IMR-90 (cell line): ENCODE measurements at regions of chr4 and their contacts with region 1.

Region 1: GRCh38 chr4:55931833-55932232 is 16.9 kb upstream of the CEP135 start:
- DNase-seq: peak; percentile 80
- ATAC-seq: peak; percentile 86
- H3K4me3 ChIP-seq: no peak overlapping the region
- H3K27ac ChIP-seq: peak overlapping the region; percentile 78
- H3K4me1 ChIP-seq: peaks cover 8% of the 10 kb centered on the region
- H3K27me3 ChIP-seq: no peaks in the 10 kb centered on the region
- CTCF ChIP-seq: no peak
- POLR2A ChIP-seq: no peak
- RAD21 ChIP-seq: no peak

Region 2: GRCh38 chr4:55491486-55491885 is 440.3 kb before region 1 on chr4:
- CTCF ChIA-PET with region 1: no interaction called
- POLR2A ChIA-PET with region 1: interaction called, 10 read pairs
- dilution Hi-C with region 1: no loop called
- in situ Hi-C with region 1: no loop called
- intact Hi-C with region 1: no loop called
- DNase-seq: peak; percentile 76
- ATAC-seq: peak; percentile 85
- H3K4me3 ChIP-seq: no peak overlapping the region
- H3K27ac ChIP-seq: no peak overlapping the region
- H3K4me1 ChIP-seq: peaks cover 7% of the 10 kb centered on the region
- H3K27me3 ChIP-seq: no peaks in the 10 kb centered on the region
- CTCF ChIP-seq: no peak
- POLR2A ChIP-seq: no peak
- RAD21 ChIP-seq: no peak

Region 3: GRCh38 chr4:56158483-56158882 is 226.7 kb after region 1 on chr4:
- CTCF ChIA-PET with region 1: no interaction called
- POLR2A ChIA-PET with region 1: no interaction called
- dilution Hi-C with region 1: no loop called
- in situ Hi-C with region 1: no loop called
- intact Hi-C with region 1: no loop called
- DNase-seq: no peak
- ATAC-seq: no peak
- H3K4me3 ChIP-seq: no peak overlapping the region
- H3K27ac ChIP-seq: no peak overlapping the region
- H3K4me1 ChIP-seq: no peaks in the 10 kb centered on the region
- H3K27me3 ChIP-seq: no peaks in the 10 kb centered on the region
- CTCF ChIP-seq: no peak
- POLR2A ChIP-seq: no peak
- RAD21 ChIP-seq: no peak

Region 4: DNA sequence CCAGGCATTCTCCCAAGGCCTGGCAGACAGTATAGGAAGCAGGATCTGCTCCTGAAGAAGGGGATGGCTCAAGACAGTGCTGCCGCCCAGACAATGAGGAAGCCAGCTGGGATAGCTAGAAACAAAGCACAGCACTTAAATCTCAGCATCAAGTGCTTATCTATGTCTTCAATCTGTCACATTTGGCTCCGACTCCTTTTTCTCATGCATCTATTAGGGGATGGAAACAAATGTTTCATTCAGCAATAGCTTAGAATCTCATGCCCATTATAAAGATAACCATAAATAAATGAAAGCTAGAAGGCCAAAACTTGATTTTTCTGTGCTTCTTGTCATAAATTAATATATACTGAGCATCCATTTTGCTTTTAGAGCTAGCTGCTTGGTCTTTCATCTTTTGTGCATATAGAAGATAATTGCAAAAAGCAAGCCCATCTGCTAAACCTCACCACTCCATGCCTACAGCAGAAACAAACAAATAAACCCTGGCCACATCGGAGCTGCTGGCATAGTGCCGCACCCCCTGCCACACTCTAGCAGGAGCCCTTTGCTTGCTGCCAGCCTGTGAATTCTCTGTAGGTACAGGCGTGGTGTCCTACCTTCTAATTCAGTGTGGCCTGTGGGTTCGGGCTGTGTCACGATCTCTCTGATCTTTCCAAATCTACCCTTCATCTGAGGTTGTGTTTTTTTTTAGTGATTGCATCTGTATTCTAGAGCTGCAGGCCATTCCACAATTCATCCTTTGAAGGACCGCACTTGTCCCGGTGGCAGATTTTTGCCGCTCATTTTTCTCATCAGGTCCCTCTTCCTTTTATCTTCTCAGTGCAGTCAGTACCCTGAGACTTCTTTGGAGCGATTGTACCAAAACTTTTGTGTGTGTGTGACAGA is 379.7 kb after region 1 on chr4:
- CTCF ChIA-PET with region 1: no interaction called
- POLR2A ChIA-PET with region 1: no interaction called
- dilution Hi-C with region 1: no loop called
- in situ Hi-C with region 1: no loop called
- intact Hi-C with region 1: no loop called
- DNase-seq: no peak
- ATAC-seq: no peak
- H3K4me3 ChIP-seq: no peak overlapping the region
- H3K27ac ChIP-seq: no peak overlapping the region
- H3K4me1 ChIP-seq: no peaks in the 10 kb centered on the region
- H3K27me3 ChIP-seq: 0 out of 2 replicates have a peak, but pooled peaks cover 2% of the 10 kb centered on the region
- CTCF ChIP-seq: no peak
- POLR2A ChIP-seq: no peak
- RAD21 ChIP-seq: no peak